ENCODE measurements at regions of chr5 and their contacts with region 1.

Region 1: DNA sequence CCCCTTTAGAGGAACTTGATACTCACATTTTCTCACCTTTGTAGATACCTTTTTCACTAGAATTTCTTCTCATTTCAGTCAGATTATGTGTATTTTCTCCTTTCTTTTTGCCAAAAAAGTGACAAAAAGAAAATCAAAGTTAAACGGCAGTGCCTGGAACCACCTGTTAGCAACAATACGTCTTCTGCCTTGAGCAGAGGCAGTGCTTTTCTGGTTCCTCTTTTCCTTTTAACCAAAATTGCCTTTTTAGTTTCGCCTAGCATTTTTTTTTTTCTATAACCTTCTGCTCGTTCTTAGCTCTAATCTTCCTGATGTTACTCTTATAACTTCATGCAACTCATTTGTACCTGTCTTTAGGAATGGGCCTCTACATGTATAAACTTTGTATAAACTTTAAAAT is 26.1 kb downstream of the SMIM32 start:
- DNase-seq: peak; percentile 81
- H3K4me3 ChIP-seq: peak overlapping the region; percentile 65
- H3K27ac ChIP-seq: peak overlapping the region; percentile 99
- H3K4me1 ChIP-seq: peaks cover 84% of the 10 kb centered on the region
- CTCF ChIP-seq: no peak

Region 2: GRCh38 chr5:136037001-136037705 is 129.8 kb before region 1 on chr5:
- CTCF ChIA-PET with region 1: interaction called, 4 read pairs
- POLR2A ChIA-PET with region 1: interaction called, 17 read pairs
- intact Hi-C with region 1: loop called (anchors 2 kb)
- DNase-seq: peak; percentile 90
- H3K4me3 ChIP-seq: peak overlapping the region; percentile 36
- H3K27ac ChIP-seq: peak overlapping the region; percentile 93
- H3K4me1 ChIP-seq: peaks cover 78% of the 10 kb centered on the region
- CTCF ChIP-seq: no peak

Region 3: GRCh38 chr5:136132557-136133221 is 34.2 kb before region 1 on chr5 and contains the start of gene SMAD5:
- CTCF ChIA-PET with region 1: no interaction called
- POLR2A ChIA-PET with region 1: interaction called, 53 read pairs
- intact Hi-C with region 1: loop called (anchors 1 kb)
- DNase-seq: peak; percentile 93
- H3K4me3 ChIP-seq: peak within 1 kb of the TSS; percentile 95
- H3K27ac ChIP-seq: peak within 1 kb of the TSS; percentile 78
- H3K4me1 ChIP-seq: peaks cover 35% of the 10 kb centered on the region
- CTCF ChIP-seq: 0 out of 2 replicates have a peak, but pooled peaks have one; percentile 5
- total RNA-seq, gene SMAD5: 32.9 and 62.0 TPM in 2 replicates

Region 4: GRCh38 chr5:136141561-136141960 is 25.3 kb before region 1 on chr5:
- CTCF ChIA-PET with region 1: no interaction called
- POLR2A ChIA-PET with region 1: interaction called, 13 read pairs
- intact Hi-C with region 1: no loop called
- DNase-seq: no peak
- H3K4me3 ChIP-seq: no peak overlapping the region
- H3K27ac ChIP-seq: no peak overlapping the region
- H3K4me1 ChIP-seq: peaks cover 61% of the 10 kb centered on the region
- CTCF ChIP-seq: no peak

Region 5: DNA sequence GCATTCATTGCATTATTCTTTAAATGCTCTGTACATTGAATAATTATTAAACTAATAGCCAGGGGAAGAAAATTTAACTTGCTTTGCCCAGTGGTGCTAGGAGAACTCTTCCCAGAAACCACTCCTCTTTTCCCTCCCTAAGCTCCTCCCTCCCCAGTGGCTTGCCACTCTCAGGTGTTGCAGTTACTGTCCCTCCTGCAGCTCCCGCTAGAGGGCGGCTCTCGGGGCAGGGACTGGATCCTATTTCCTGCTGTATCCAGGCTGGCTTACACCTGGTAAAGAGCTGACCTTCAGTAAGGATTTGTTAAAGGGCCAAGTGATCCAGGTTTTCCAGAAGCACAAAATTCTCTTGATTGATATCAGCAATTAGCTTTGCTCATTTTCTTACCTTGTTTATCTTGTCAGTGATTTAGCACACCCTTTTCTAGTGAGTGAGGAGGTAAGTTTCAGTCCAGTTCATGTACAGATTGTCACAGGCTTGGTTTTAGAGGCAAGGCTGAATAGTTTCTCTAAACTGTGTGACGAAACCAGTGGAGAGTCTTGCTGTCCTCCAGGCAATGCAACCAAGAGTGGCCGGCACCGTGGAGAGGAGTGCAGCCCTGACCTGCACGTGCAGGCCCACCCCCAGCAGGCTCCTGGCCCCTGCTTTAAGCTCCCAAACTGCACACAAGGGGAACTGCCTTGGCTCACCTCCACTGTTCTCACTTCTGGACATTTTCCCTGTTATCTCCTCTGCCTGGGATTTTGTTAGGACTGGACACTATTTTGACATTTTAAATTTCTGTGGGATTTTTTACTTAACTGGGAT is 908.5 kb after region 1 on chr5:
- CTCF ChIA-PET with region 1: no interaction called
- POLR2A ChIA-PET with region 1: no interaction called
- intact Hi-C with region 1: loop called (anchors 10 kb)
- DNase-seq: peak; percentile 85
- H3K4me3 ChIP-seq: no peak overlapping the region
- H3K27ac ChIP-seq: peak overlapping the region; percentile 100
- H3K4me1 ChIP-seq: peaks cover 91% of the 10 kb centered on the region
- CTCF ChIP-seq: peak; percentile 97

Region 6: GRCh38 chr5:137754126-137754960 is 1587.4 kb after region 1 on chr5 and contains the start of gene HNRNPA0:
- CTCF ChIA-PET with region 1: no interaction called
- POLR2A ChIA-PET with region 1: no interaction called
- intact Hi-C with region 1: loop called (anchors 10 kb)
- DNase-seq: peak; percentile 98
- H3K4me3 ChIP-seq: peak within 1 kb of the TSS; percentile 99
- H3K27ac ChIP-seq: peak within 1 kb of the TSS; percentile 72
- H3K4me1 ChIP-seq: peaks cover 23% of the 10 kb centered on the region
- CTCF ChIP-seq: no peak
- total RNA-seq, gene HNRNPA0: 20.6 and 25.8 TPM in 2 replicates

Measured in OCI-LY7 (cell line).